Body of pancreas (tissue), 4 donors: ENCODE measurements at regions of chr1 and their contacts with region 1.

Region 1: GRCh38 chr1:162056043-162056442 is 13.4 kb upstream of the NOS1AP start:
- DNase-seq: peak; percentile 65 to 79 (median 74)
- ATAC-seq: peak; percentile 94
- H3K4me3 ChIP-seq: no peak overlapping the region
- H3K27ac ChIP-seq: no peak overlapping the region
- H3K4me1 ChIP-seq: no peaks in the 10 kb centered on the region
- H3K27me3 ChIP-seq: no peaks in the 10 kb centered on the region
- CTCF ChIP-seq: peak; percentile 81 to 95 (median 92)
- POLR2A ChIP-seq: no peak

Region 2: DNA sequence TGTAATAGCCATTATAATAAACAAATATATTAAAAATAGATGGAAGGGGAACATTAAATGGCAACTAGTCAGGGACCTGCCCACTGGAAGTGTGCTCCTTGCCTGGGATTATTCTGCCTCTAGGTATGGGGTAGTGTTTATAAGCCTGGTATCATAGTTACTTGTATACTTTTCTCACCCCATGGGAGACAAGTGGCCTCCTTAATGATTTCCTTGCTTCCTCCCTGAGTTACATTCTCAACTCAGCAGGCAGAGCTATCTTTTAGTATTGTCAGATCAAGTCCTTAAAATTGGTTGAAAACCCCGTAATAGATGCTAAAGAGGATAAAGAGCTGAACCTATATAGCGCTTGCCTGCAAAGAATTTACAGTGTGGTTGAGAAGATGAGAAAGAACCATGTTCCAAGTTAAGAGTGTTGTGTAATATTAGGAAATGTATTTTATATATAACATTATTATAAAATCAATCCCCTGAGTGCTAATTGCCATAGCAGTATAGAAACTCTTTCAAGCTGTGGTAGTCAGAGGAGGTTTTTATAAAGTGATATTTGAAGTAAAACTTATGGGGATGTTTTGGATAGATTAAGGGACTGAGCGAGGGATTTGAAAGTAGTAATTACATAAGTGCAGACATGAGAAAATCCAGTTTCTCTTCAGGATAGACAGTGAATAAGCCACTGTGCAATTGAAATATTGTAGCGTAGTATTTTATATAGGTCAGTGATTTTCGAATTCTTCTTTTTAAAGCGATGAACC is 214.2 kb after region 1 on chr1:
- intact Hi-C with region 1: loop called (anchors 5 kb)
- DNase-seq: no peak
- ATAC-seq: no peak
- H3K4me3 ChIP-seq: no peak overlapping the region
- H3K27ac ChIP-seq: no peak overlapping the region
- H3K4me1 ChIP-seq: no peaks in the 10 kb centered on the region
- H3K27me3 ChIP-seq: no peaks in the 10 kb centered on the region
- CTCF ChIP-seq: no peak
- POLR2A ChIP-seq: no peak

Region 3: DNA sequence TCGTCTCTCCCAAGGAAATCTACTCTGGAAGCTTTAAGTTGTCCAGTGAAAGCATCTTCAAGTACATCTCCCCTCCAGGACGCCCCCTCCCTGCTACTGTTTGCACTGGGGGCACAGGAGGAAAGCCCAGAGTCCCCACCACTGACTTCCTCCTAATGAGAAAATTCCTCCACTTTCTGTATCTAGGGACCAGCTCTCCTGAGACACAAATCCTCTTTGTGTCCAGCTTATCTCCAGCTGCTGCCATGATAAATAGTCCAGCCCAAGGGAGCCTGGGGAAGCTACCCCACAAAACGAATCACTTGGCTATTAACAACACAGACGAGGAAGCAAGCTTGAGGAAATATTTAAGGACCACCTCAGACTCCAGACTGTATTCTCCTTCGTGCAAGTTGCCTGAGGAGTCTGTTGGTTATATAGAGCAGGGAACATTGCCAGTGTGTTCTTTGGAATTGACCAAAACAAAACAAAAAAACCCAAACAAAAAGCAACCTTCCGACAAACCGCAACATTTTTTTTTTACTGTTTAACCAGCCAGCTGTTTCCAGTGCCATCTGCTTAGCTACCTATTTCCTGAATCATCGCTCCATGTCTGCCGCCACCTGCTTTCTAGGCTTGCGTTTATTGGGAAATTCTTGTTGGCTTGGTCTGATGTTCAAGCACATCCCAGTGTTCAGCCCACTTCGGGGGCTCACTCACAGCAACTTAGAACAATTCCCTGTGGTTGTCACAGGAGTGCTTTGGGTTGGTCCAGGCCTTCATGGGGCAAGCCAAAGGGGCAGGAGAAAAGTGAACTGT is 333.2 kb after region 1 on chr1:
- intact Hi-C with region 1: loop called (anchors 5 kb)
- DNase-seq: no peak
- ATAC-seq: no peak
- H3K4me3 ChIP-seq: no peak overlapping the region
- H3K27ac ChIP-seq: no peak overlapping the region
- H3K4me1 ChIP-seq: no peaks in the 10 kb centered on the region
- H3K27me3 ChIP-seq: no peaks in the 10 kb centered on the region
- CTCF ChIP-seq: no peak
- POLR2A ChIP-seq: no peak